Activated naive CD4-positive, alpha-beta T cell treated with anti-CD3 and anti-CD28 coated beads for 36 hours (primary cell): ENCODE measurements at regions of chr5 and their contacts with region 1.

Region 1: GRCh38 chr5:56328753-56329560 is 95.8 kb upstream of the ANKRD55 start:
- DNase-seq: peak; percentile 76
- H3K4me3 Mint-ChIP-seq: peak overlapping the region; percentile 23
- H3K27ac Mint-ChIP-seq: peak overlapping the region; percentile 91
- H3K4me1 Mint-ChIP-seq: peaks cover 50% of the 10 kb centered on the region
- H3K27me3 Mint-ChIP-seq: no peaks in the 10 kb centered on the region

Region 2: GRCh38 chr5:55232985-55233928 is 1095.7 kb before region 1 on chr5 and contains the start of gene CCNO:
- CTCF ChIA-PET with region 1: no interaction called
- intact Hi-C with region 1: loop called (anchors 2 kb)
- DNase-seq: peak; percentile 63
- H3K4me3 Mint-ChIP-seq: peak within 1 kb of the TSS; percentile 76
- H3K27ac Mint-ChIP-seq: no peak within 1 kb of the TSS
- H3K4me1 Mint-ChIP-seq: peaks cover 32% of the 10 kb centered on the region
- H3K27me3 Mint-ChIP-seq: peaks cover 69% of the 10 kb centered on the region
- total RNA-seq, gene CCNO: not detected

Region 3: DNA sequence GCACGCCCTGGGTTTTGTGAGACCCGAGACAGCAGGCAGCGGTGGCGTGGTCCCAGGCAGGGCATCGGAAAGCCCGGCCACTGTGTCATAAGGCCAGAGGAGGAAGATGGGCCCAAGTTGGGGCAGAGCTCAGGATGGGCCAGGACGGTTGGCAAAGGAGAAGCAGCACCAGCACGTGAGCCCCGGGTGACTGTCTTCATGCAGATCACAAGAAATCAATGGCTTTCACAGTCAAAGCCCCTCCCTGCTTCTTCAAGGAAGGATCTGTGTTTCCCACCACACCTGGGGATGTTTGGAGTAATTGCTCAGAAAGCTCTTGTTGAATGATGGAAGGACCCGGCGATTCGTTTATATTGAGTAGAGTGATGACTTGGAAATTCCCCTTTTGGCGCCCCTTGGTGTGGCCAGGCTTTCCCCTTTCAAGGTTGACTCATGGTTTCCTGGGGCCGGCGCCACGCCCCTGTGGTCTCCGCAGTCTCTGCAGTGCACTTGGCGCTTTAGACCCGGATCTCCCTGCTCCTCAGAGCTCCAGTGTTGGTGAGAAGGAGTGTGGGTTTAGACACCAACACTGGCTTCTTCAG is 425.7 kb before region 1 on chr5:
- CTCF ChIA-PET with region 1: no interaction called
- intact Hi-C with region 1: loop called (anchors 2 kb)
- DNase-seq: peak; percentile 84
- H3K4me3 Mint-ChIP-seq: no peak overlapping the region
- H3K27ac Mint-ChIP-seq: no peak overlapping the region
- H3K4me1 Mint-ChIP-seq: peaks cover 25% of the 10 kb centered on the region
- H3K27me3 Mint-ChIP-seq: peaks cover 4% of the 10 kb centered on the region

Region 4: DNA sequence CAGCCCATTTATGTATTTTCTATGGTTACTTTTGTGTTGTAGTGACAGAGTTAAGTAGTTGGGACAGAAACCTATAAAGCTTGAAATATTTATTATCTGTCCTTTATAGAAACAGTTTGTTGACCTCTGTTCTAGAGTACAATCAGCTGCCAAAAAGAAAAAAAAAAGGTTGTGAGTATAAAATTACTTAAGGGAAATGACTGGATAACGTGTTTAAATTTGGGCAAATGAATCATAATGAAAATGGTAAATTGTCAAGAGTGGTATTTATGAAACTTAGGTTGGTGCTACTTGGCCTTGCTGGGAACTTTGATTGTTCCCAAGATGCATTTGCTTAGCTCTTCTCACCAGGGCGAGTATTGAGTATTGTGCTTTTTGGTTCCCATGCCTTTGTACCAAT is 264.0 kb before region 1 on chr5:
- CTCF ChIA-PET with region 1: no interaction called
- intact Hi-C with region 1: loop called (anchors 1 kb)
- DNase-seq: peak; percentile 52
- H3K4me3 Mint-ChIP-seq: peak overlapping the region; percentile 10
- H3K27ac Mint-ChIP-seq: peak overlapping the region; percentile 70
- H3K4me1 Mint-ChIP-seq: peaks cover 75% of the 10 kb centered on the region
- H3K27me3 Mint-ChIP-seq: no peaks in the 10 kb centered on the region

Region 5: DNA sequence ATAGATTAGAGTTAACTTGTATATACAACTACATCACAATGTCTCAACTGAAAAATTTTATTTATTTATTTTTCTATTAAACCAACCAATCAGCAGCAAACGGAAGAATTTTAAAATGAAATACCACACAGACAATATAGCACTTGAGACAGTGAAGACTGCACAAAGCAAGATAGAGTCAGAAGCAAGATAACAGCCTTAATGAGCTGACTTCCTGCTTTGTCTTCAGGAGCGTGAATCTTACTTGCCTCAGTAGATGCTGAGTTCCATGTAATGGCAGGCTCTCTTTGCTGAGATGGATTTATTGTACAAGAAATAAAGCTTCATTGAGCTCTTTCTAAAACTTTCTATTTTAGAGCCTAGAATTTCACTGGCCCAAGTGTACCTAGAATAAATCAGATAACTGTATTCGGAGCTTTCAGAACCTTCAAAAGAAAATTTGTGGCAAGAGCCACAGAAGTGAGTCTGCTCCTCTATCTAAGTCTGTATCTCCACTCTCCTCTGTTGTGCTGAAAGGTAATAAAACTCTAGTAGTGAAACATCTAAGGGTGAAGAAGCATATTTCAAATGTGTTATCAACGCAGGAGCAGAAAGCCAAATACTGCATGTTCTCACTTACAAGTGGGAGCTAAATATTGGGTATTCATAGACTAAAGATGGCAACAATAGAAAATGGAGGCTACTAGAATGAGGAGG is 12.5 kb before region 1 on chr5:
- CTCF ChIA-PET with region 1: interaction called, 13 read pairs
- intact Hi-C with region 1: loop called (anchors 1 kb)
- DNase-seq: no peak
- H3K4me3 Mint-ChIP-seq: no peak overlapping the region
- H3K27ac Mint-ChIP-seq: no peak overlapping the region
- H3K4me1 Mint-ChIP-seq: peaks cover 38% of the 10 kb centered on the region
- H3K27me3 Mint-ChIP-seq: no peaks in the 10 kb centered on the region

Region 6: GRCh38 chr5:56610093-56610698 is 281.2 kb after region 1 on chr5:
- CTCF ChIA-PET with region 1: no interaction called
- intact Hi-C with region 1: loop called (anchors 1 kb)
- DNase-seq: peak; percentile 74
- H3K4me3 Mint-ChIP-seq: no peak overlapping the region
- H3K27ac Mint-ChIP-seq: peak overlapping the region; percentile 59
- H3K4me1 Mint-ChIP-seq: peaks cover 74% of the 10 kb centered on the region
- H3K27me3 Mint-ChIP-seq: no peaks in the 10 kb centered on the region

Region 7: GRCh38 chr5:56676091-56676768 is 347.3 kb after region 1 on chr5:
- CTCF ChIA-PET with region 1: no interaction called
- intact Hi-C with region 1: no loop called
- DNase-seq: no peak
- H3K4me3 Mint-ChIP-seq: no peak overlapping the region
- H3K27ac Mint-ChIP-seq: no peak overlapping the region
- H3K4me1 Mint-ChIP-seq: peaks cover 10% of the 10 kb centered on the region
- H3K27me3 Mint-ChIP-seq: no peaks in the 10 kb centered on the region

Region 8: DNA sequence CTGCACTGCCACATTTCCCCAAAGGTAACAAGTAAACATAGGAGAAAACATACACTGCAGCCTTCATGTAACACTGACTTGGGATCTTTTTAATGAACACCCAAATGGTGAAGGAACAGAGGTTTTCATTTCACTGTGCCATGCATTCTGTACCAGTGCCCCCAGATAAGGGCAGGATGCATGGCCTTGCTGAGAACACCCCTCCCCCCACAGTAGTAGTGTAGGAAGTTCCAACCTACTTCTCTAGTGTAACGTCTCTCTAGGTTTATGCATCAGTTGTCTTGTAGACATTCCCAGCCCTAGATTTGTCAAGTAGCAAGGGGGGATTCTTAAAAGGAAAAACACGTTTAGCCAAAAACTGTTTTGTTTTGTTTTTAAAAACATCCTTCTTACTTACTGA is 516.3 kb after region 1 on chr5:
- CTCF ChIA-PET with region 1: no interaction called
- intact Hi-C with region 1: loop called (anchors 2 kb)
- DNase-seq: no peak
- H3K4me3 Mint-ChIP-seq: no peak overlapping the region
- H3K27ac Mint-ChIP-seq: peak overlapping the region; percentile 27
- H3K4me1 Mint-ChIP-seq: peaks cover 85% of the 10 kb centered on the region
- H3K27me3 Mint-ChIP-seq: no peaks in the 10 kb centered on the region